Mammary epithelial cell (primary cell): ENCODE measurements at regions of chr7 and their contacts with region 1.

Region 1: DNA sequence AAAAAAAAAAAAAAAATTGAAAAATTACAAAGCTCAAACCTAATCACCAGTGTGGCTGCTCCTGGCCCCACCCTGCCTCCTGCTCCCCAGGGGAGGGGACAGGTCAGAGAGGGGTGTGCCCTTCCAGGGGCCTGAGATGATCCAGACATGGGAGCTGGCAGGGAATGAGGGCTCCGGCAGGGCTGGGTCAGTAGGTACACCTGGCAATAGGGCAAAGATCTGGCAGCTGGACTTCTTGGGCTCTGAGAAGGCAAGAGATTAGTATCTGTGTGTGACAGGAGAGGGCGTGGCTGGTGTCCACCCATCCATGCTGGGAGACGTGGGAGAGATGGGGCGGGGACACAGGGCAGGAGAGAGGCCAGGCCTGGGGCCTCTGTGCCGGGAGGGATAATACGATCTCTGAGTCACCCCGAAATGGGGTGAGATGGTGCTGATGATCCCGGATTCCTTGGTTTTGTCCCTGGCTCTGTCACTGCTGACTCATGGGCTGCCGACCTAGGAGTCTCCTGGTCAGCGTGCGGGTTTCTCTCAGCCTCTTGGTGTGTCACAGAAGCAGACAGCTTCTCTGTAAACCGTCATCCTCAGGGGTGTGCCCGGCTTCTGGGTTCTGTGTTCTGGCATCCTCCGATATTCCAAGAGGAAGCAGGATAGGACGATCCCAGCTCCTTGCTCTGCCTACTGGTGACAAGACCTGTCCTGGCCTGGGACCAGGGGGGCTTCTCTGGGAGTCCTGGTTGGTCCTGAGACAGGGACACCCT is 8.3 kb upstream of the CLDN4 start:
- DNase-seq: peak; percentile 100
- H3K4me3 ChIP-seq: no peak overlapping the region
- H3K27ac ChIP-seq: peak overlapping the region; percentile 90
- H3K4me1 ChIP-seq: peaks cover 19% of the 10 kb centered on the region
- H3K27me3 ChIP-seq: no peaks in the 10 kb centered on the region
- CTCF ChIP-seq: no peak

Region 2: GRCh38 chr7:73811760-73812168 is 10.7 kb before region 1 on chr7:
- CTCF ChIA-PET with region 1: no interaction called
- dilution Hi-C with region 1: no loop called
- in situ Hi-C with region 1: no loop called
- intact Hi-C with region 1: loop called (anchors 1 kb)
- DNase-seq: peak; percentile 68
- H3K4me3 ChIP-seq: no peak overlapping the region
- H3K27ac ChIP-seq: no peak overlapping the region
- H3K4me1 ChIP-seq: peaks cover 2% of the 10 kb centered on the region
- H3K27me3 ChIP-seq: no peaks in the 10 kb centered on the region
- CTCF ChIP-seq: peak; percentile 87 to 93

Region 3: DNA sequence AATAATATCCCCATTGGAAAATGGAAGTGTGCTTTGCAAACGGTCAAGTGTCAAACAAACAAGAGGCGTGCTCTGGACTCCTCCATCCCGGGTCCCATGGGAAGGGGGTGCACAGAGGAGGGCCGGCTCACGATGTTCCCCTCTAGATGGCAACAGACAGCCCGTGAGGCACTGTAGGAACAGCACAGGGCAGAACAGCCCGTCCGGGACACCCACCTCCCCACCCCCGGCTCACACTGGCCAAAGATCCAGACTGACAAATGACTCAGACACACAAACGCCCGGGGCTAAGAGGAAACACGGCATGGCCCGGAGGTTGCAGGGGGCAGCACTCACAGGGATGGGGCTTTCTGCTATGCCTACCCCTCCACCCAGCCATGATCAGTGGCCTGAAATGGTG is 200.5 kb after region 1 on chr7:
- CTCF ChIA-PET with region 1: no interaction called
- dilution Hi-C with region 1: no loop called
- in situ Hi-C with region 1: no loop called
- intact Hi-C with region 1: no loop called
- DNase-seq: peak; percentile 40
- H3K4me3 ChIP-seq: no peak overlapping the region
- H3K27ac ChIP-seq: no peak overlapping the region
- H3K4me1 ChIP-seq: peaks cover 5% of the 10 kb centered on the region
- H3K27me3 ChIP-seq: no peaks in the 10 kb centered on the region
- CTCF ChIP-seq: no peak